ENCODE measurements at regions of chr11 and their contacts with region 1.

Region 1: GRCh38 chr11:74069147-74070047 is 60.5 kb upstream of the UCP3 start:
- DNase-seq: no peak
- H3K4me3 ChIP-seq: no peak overlapping the region
- CTCF ChIP-seq: no peak

Region 2: GRCh38 chr11:74011360-74012073 is 57.9 kb before region 1 on chr11:
- in situ Hi-C with region 1: loop called (anchors 5 kb)
- DNase-seq: no peak
- H3K4me3 ChIP-seq: no peak overlapping the region
- CTCF ChIP-seq: no peak

Region 3: DNA sequence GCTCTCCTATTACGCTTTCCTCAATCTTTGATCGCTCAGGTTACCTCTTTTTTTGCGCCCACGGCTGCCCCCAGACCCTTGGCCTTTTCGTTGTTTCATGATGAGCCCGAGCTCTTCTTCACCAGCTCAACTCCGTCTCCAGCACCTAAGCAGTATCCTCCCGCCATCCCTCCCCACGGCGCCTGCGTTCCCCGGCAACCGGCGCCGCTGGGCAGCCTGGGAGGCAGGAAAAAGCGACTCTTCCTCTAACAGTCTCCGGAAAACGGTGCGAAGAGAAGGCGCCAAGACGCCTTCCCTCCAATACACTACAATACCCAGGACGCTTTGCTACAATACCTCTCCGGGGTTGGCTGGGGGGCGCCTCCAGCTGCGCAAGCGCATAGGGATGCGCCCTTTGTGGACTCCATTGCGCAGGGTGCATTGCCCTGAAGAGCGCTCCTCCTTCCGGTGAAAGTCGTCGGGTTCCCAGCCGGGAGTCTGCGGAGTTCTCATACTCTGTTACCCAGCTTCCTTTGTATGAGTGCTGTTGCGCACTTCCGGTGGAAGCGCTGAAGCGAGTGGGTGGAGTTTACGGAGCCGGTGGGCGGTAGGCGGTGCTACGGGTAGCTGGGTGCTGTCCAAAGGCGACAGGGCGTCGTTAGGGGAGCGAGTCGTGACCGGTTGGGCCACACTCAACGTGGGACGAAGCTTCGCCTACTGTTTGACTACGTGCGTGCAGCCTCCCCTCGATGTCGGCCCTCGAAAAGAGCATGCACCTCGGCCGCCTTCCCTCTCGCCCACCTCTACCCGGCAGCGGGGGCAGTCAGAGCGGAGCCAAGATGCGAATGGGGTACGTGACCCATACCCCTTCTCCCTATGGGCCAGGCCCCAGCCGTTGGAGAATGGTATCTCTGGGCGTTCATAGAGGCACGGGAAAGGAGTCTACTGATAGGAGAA is 101.6 kb after region 1 on chr11 and contains the starts of genes C2CD3 and PPME1:
- in situ Hi-C with region 1: loop called (anchors 5 kb)
- DNase-seq: peak; percentile 99
- H3K4me3 ChIP-seq: peak within 1 kb of the TSS; percentile 88
- CTCF ChIP-seq: peak; percentile 46